ENCODE measurements at regions of chr1 and their contacts with region 1.

Region 1: GRCh38 chr1:86395771-86396497 is at the start of gene ODF2L:
- DNase-seq: peak; percentile 90
- H3K4me3 Mint-ChIP-seq: peak within 1 kb of the TSS; percentile 97
- H3K27ac Mint-ChIP-seq: peak within 1 kb of the TSS; percentile 96
- H3K4me1 Mint-ChIP-seq: peaks cover 54% of the 10 kb centered on the region
- H3K27me3 Mint-ChIP-seq: no peaks in the 10 kb centered on the region
- total RNA-seq, gene ODF2L: 21.0 and 22.4 TPM in 2 replicates

Region 2: GRCh38 chr1:85297855-85298629 is 1097.9 kb before region 1 on chr1:
- intact Hi-C with region 1: loop called (anchors 5 kb)
- DNase-seq: peak; percentile 62
- H3K4me3 Mint-ChIP-seq: peak overlapping the region; percentile 1
- H3K27ac Mint-ChIP-seq: peak overlapping the region; percentile 80
- H3K4me1 Mint-ChIP-seq: peaks cover 34% of the 10 kb centered on the region
- H3K27me3 Mint-ChIP-seq: peaks cover 47% of the 10 kb centered on the region

Region 3: DNA sequence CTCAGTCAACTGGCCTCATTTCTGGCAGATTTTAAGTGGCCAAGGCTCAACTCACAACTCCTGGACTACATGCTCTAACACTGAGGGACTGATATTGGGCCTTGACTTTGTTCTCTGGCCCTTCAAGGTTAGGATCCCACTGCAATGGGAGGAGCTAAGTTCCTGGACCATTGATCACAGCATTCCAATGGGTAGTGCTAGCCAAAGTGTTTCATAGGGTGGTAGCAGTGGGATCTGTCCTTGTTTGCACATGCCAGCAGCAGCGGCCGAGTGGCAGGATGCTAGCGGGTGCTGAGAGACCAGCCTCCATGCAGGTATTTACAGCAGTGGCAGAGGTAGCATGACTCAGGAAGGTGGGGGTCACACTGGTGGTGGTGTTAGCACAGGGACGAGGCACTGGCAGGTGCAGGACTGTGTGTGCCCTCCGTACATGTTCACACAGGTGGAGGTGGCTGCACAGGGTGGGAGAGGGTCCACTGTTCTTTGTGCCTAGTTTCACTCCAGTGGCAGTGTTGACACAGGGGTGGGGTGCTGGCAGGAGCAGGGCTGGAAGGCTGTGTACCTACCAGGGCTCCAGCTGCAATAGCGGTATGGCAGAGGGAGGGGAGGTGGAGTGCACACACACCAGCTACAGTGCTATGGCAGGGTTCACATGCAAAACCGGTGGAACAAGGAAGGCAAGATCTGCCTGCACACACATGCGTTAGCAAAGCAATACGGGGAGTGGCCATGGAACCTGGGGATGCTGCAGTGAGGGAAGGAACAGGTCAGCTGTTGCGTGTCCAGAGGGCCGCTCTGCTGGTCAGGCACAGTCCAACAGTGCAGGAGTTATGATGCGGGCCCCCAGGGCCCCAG is 291.1 kb before region 1 on chr1:
- intact Hi-C with region 1: no loop called
- DNase-seq: no peak
- H3K4me3 Mint-ChIP-seq: no peak overlapping the region
- H3K27ac Mint-ChIP-seq: no peak overlapping the region
- H3K4me1 Mint-ChIP-seq: no peaks in the 10 kb centered on the region
- H3K27me3 Mint-ChIP-seq: no peaks in the 10 kb centered on the region

Region 4: GRCh38 chr1:87084244-87084836 is 688.4 kb after region 1 on chr1:
- intact Hi-C with region 1: loop called (anchors 5 kb)
- DNase-seq: no peak
- H3K4me3 Mint-ChIP-seq: no peak overlapping the region
- H3K27ac Mint-ChIP-seq: no peak overlapping the region
- H3K4me1 Mint-ChIP-seq: peaks cover 5% of the 10 kb centered on the region
- H3K27me3 Mint-ChIP-seq: no peaks in the 10 kb centered on the region

Region 5: GRCh38 chr1:87131809-87132283 is 735.9 kb after region 1 on chr1:
- intact Hi-C with region 1: no loop called
- DNase-seq: peak; percentile 59
- H3K4me3 Mint-ChIP-seq: peak overlapping the region; percentile 76
- H3K27ac Mint-ChIP-seq: no peak overlapping the region
- H3K4me1 Mint-ChIP-seq: no peaks in the 10 kb centered on the region
- H3K27me3 Mint-ChIP-seq: peaks cover 32% of the 10 kb centered on the region